ENCODE measurements at regions of chr12 and their contacts with region 1.

Region 1: GRCh38 chr12:2020511-2020910 is 16.3 kb upstream of the DCP1B start:
- DNase-seq: no peak
- H3K4me3 ChIP-seq: no peak overlapping the region
- H3K4me3 Mint-ChIP-seq: no peak overlapping the region
- H3K27ac ChIP-seq: no peak overlapping the region
- H3K27ac Mint-ChIP-seq: no peak overlapping the region
- H3K4me1 ChIP-seq: no peaks in the 10 kb centered on the region
- H3K4me1 Mint-ChIP-seq: no peaks in the 10 kb centered on the region
- H3K27me3 ChIP-seq: no peaks in the 10 kb centered on the region
- H3K27me3 Mint-ChIP-seq: peaks cover 6 to 13% of the 10 kb centered on the region in 2 donors

Region 2: DNA sequence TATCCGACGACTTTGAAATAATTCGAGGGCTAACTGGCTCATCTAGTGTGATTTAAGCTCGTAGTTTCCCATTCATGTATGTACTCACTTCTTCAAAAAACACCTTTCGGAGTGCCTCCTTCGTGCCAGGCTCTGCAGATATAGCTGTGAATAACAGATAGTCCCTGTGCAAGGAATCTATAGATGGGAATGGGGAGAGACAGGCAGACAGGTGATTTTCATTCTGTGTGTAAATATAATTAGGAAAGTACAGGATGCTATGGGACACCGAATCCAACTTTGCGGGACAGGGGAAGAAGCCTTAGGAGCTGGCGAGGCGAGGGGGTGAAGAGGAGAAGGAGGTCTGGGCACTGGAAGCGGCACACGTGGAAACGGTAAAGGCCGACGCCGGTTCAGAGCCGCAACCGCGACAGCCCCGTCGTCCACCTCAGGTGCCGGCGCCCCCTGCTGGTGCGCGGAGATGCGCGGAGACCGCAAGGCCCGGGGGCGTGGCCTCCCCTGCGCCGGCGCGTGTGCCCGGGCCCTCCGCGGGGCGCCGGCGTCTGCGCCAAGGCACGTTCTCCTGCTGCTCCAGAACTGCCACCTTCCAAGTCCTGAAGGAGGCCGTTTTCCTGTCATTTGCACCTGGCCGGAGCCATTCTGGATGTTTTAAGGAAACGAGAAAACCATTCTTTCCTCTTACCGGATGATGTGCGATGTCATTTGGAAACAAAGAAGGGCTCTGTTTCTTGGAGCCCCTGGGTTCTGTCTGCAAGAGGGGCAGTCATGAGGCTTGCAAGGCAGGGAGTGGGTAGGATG is 14.3 kb after region 1 on chr12:
- CTCF ChIA-PET with region 1: interaction called, 10 read pairs
- POLR2A ChIA-PET with region 1: no interaction called
- intact Hi-C with region 1: no loop called
- DNase-seq: peak; percentile 74 to 84 (median 81)
- H3K4me3 ChIP-seq: peak overlapping the region in 1 of 2 donors; percentile 53
- H3K4me3 Mint-ChIP-seq: peak overlapping the region; percentile 69 to 78 (median 74)
- H3K27ac ChIP-seq: no peak overlapping the region
- H3K27ac Mint-ChIP-seq: peak overlapping the region in 5 of 7 donors; percentile 4 to 80 (median 36)
- H3K4me1 ChIP-seq: peaks cover 11% of the 10 kb centered on the region
- H3K4me1 Mint-ChIP-seq: peaks cover 6 to 11% (median 9%) of the 10 kb centered on the region in 4 donors
- H3K27me3 ChIP-seq: no peaks in the 10 kb centered on the region
- H3K27me3 Mint-ChIP-seq: peaks cover 24 to 27% of the 10 kb centered on the region in 2 donors

Measured in CD4-positive, alpha-beta memory T cell (primary cell).